Posterior cingulate gyrus (tissue), 11 donors: ENCODE measurements at regions of chr15 and their contacts with region 1.

Region 1: DNA sequence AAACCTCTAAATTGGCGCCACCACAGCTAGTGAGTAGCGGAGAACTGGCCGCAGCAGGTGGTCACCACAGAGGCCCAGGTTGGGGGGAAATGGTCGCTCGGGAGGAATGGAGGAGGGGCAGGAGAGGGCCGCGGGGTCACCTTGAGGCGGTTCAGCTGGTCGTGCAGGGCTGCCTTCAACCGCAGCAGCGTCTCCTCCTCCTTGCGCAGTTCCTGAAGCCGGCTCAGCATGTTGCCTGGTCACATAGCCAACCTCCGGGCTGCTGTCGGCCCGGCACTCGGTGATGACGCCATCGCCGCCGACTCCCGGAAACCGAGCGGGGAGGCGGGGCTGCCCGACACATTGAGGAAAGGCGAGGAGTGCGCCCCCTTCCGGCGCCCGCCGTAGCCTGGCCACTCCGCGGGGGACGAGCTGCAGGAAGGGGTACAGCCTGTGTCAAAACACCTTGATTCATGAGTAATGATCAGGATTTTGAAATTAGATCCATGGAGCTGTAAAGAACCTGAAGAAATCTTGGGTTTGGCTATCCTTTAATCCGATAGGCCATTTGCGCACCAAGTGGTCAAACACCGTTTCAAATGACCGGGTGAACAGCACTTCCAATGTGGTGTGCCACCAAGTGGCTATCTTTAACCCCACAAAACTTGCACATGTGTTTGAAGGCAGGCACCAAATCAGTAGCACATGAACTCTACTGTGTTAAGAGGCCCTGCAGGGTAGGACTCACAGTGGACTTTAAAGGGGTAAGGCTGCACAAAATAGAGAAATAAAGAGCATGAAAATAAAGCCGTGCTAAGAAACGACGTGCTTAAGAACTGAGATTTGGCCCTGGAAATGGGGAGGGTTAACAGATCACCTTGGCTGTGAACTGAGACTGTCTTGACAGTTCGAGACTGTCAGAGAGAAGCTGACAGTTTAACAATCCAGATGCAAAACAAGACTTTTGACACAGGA is at the start of gene SNAPC5:
- DNase-seq: peak; percentile 92 to 100 (median 96)

Region 2: GRCh38 chr15:65841121-65841925 is 656.5 kb before region 1 on chr15:
- intact Hi-C with region 1: no loop called
- DNase-seq: peak in 1 of 10 donors; percentile 5

Region 3: GRCh38 chr15:66386204-66387123 is 111.3 kb before region 1 on chr15 and contains the start of gene MAP2K1:
- intact Hi-C with region 1: loop called (anchors 1 kb)
- DNase-seq: peak; percentile 96 to 99 (median 98)